ENCODE measurements at regions of chr5 and their contacts with region 1.

Region 1: GRCh38 chr5:141564216-141564692 is 54.5 kb downstream of the DIAPH1 start:
- ATAC-seq: peak in 7 of 8 experiments; percentile 24 to 87 (median 44)
- H3K4me3 ChIP-seq: no peak overlapping the region
- H3K27ac ChIP-seq: no peak overlapping the region
- H3K4me1 ChIP-seq: peaks cover 13 to 14% of the 10 kb centered on the region in 2 donors

Region 2: DNA sequence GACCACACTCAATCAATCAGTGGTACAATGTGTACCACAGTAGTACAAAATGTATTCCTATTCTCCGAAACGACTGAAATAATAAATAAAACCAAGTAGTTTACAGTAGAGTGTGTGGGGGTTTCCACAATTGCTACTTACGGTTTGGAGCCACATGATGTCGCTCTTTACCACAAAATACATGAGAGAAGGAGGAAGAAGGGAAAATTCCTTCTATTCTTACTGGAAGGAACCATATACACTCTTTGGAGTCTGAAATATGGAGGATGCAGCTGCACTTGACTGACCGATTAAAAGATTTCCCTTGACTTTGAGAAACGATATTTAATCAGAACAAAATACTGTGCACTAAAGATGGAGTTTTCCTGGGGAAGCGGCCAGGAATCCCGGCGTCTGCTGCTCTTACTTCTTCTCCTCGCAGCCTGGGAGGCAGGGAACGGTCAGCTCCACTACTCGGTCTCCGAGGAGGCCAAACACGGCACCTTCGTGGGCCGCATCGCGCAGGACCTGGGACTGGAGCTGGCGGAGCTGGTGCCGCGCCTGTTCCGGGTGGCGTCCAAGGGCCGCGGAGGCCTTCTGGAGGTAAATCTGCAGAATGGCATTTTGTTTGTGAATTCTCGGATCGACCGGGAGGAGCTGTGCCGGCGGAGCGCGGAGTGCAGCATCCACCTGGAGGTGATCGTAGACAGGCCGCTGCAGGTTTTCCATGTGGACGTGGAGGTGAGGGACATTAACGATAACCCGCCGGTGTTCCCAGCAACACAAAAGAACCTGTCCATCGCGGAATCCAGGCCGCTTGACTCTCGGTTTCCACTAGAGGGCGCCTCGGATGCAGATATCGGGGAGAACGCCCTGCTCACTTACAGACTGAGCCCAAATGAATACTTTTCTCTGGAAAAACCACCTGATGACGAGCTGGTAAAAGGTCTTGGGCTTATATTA is 757.1 kb before region 1 on chr5 and contains the start of gene PCDHA4:
- in situ Hi-C with region 1: loop called in 1 of 9 experiments (anchors 25 kb)
- ATAC-seq: peak in 7 of 8 experiments; percentile 71 to 98 (median 88)
- H3K4me3 ChIP-seq: peak within 1 kb of the TSS; percentile 50 to 88 (median 76)
- H3K27ac ChIP-seq: peak within 1 kb of the TSS; percentile 85 to 89
- H3K4me1 ChIP-seq: no peaks in the 10 kb centered on the region
- total RNA-seq, gene PCDHA4: 0.05 to 50.8 (median 14.1) TPM

Region 3: DNA sequence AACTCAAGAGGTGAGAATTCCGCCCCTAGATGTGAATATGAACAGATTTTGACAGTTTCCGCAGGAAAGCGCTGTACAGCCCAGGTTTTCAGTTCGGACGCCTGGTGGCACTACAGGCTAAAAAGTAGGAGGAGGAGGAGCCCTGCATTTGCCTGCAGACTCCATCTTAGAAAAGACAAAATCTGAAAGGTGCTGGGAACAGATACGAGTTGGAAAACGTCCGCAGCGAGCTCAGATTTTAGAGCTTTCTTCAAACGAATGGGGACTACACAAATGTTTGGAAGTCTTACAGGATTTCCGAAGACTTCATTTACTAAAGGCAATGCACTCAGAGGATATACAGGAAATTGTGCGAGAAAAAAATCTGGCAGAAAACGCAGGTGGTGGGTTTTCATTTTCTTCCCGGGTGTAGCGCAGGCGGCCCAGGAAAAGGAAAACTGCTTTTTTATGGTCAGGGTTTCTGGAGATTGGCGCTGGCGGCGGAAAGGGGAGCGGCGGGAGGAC is 479.7 kb before region 1 on chr5:
- in situ Hi-C with region 1: loop called in 2 of 9 experiments (anchors 25 kb)
- ATAC-seq: peak in 5 of 8 experiments; percentile 48 to 99 (median 73)
- H3K4me3 ChIP-seq: peak overlapping the region in 2 of 5 donors; percentile 14 to 38
- H3K27ac ChIP-seq: no peak overlapping the region
- H3K4me1 ChIP-seq: no peaks in the 10 kb centered on the region

Region 4: GRCh38 chr5:141192110-141192732 is 372.0 kb before region 1 on chr5 and contains the start of gene PCDHB10:
- in situ Hi-C with region 1: loop called in 4 of 9 experiments (anchors 25 kb)
- ATAC-seq: peak; percentile 28 to 80 (median 58)
- H3K4me3 ChIP-seq: peak within 1 kb of the TSS; percentile 22 to 53 (median 39)
- H3K27ac ChIP-seq: no peak within 1 kb of the TSS
- H3K4me1 ChIP-seq: no peaks in the 10 kb centered on the region
- total RNA-seq, gene PCDHB10: 0.20 to 25.4 (median 5.5) TPM

Region 5: DNA sequence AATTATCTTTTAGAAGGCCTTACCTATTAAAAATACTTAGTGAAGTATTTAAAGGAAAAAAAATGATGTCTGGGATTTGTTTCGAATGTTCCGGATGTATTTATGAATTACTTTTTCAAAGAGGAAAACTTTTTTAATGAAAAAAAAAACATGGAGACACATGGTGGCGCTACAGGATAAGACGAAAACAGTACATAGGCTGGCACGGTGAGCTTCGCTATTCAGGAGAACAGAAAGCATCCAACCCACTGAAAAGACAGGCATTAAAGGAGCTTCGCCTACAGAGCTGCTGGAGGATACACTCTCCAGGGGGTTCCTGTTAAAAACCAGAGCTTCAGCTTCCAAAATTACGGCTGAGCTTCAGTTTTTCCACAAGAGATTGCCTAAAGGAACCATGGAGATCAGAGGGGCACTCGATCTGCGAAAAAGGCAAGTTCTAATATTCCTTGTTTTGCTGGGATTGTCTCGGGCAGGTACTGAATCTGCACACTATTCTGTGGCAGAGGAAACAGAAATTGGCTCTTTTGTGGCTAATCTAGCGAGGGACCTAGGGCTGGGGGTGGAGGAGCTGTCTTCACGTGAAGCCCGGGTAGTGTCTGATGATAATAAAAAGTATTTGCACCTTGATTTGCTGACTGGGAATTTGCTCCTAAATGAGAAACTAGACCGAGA is 341.0 kb before region 1 on chr5 and contains the start of gene PCDHB14:
- in situ Hi-C with region 1: loop called in 3 of 9 experiments (anchors 25 kb)
- ATAC-seq: peak; percentile 61 to 94 (median 86)
- H3K4me3 ChIP-seq: peak within 1 kb of the TSS; percentile 22 to 42 (median 38)
- H3K27ac ChIP-seq: peak within 1 kb of the TSS in 1 of 2 donors; percentile 47
- H3K4me1 ChIP-seq: no peaks in the 10 kb centered on the region
- total RNA-seq, gene PCDHB14: 1.2 to 16.7 (median 6.5) TPM

Region 6: GRCh38 chr5:141412854-141413539 is 151.3 kb before region 1 on chr5 and contains the start of gene PCDHGA10:
- in situ Hi-C with region 1: loop called in 2 of 9 experiments (anchors 10 to 25 kb)
- ATAC-seq: peak in 5 of 8 experiments; percentile 27 to 60 (median 56)
- H3K4me3 ChIP-seq: peak within 1 kb of the TSS in 4 of 5 donors; percentile 15 to 40 (median 24)
- H3K27ac ChIP-seq: no peak within 1 kb of the TSS
- H3K4me1 ChIP-seq: peaks cover 11 to 15% of the 10 kb centered on the region in 2 donors
- total RNA-seq, gene PCDHGA10: 2.1 to 7.6 (median 4.4) TPM

Region 7: GRCh38 chr5:141849375-141850243 is 285.4 kb after region 1 on chr5:
- in situ Hi-C with region 1: no loop called
- ATAC-seq: peak; percentile 79 to 89 (median 81)
- H3K4me3 ChIP-seq: peak overlapping the region; percentile 42 to 66 (median 47)
- H3K27ac ChIP-seq: peak overlapping the region; percentile 90 to 95
- H3K4me1 ChIP-seq: peaks cover 41 to 42% of the 10 kb centered on the region in 2 donors

Region 8: GRCh38 chr5:141923448-141924352 is 359.4 kb after region 1 on chr5 and contains the start of gene DELE1:
- in situ Hi-C with region 1: no loop called
- ATAC-seq: peak; percentile 93 to 97 (median 95)
- H3K4me3 ChIP-seq: peak within 1 kb of the TSS; percentile 43 to 70 (median 50)
- H3K27ac ChIP-seq: peak within 1 kb of the TSS; percentile 92 to 96
- H3K4me1 ChIP-seq: peaks cover 12 to 13% of the 10 kb centered on the region in 2 donors
- total RNA-seq, gene DELE1: 26.9 to 78.7 (median 39.9) TPM

Measured in motor neuron (in vitro differentiated cells).